Activated T-helper 2 cell treated with anti-CD3 and anti-CD28 coated beads, Interferon-gamma antibody, Interleukin-2, Interleukin-4, amounts not matched to agents 10 μg/mL and 5 μg/mL and 100 μg/mL, durations not matched to agents 14 hours and 24 hours and 36 hours (primary cell): ENCODE measurements at regions of chr3 and their contacts with region 1.

Region 1: GRCh38 chr3:45938864-45939263 is 4.4 kb upstream of the CXCR6 start:
- DNase-seq: peak; percentile 75
- H3K4me3 Mint-ChIP-seq: no peak overlapping the region
- H3K27ac Mint-ChIP-seq: no peak overlapping the region
- H3K4me1 Mint-ChIP-seq: peaks cover 44% of the 10 kb centered on the region
- H3K27me3 Mint-ChIP-seq: no peaks in the 10 kb centered on the region

Region 2: DNA sequence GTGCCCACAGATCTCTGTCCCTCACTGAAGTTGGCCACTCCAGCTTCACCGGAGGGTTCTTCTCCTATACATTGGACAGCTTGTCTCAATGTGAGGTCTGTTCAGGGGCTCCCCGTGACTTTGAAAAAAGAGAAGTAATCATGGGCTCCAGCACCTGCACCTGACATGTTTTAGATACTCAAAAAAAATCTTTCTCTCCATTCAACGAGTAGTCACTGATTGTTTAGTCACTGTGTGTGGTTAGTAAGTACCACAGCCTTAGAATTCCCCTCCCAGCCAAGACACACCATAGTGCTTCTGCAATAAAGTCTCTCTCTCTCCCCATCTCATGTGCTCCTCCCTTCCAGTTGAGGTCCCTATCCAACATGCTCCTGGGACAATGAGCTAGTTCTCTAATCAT is 33.9 kb before region 1 on chr3:
- intact Hi-C with region 1: no loop called
- DNase-seq: no peak
- H3K4me3 Mint-ChIP-seq: no peak overlapping the region
- H3K27ac Mint-ChIP-seq: no peak overlapping the region
- H3K4me1 Mint-ChIP-seq: peaks cover 22% of the 10 kb centered on the region
- H3K27me3 Mint-ChIP-seq: peaks cover 38% of the 10 kb centered on the region

Region 3: GRCh38 chr3:45915518-45916231 is 23.2 kb before region 1 on chr3:
- intact Hi-C with region 1: loop called (anchors 1 kb)
- DNase-seq: peak; percentile 68
- H3K4me3 Mint-ChIP-seq: peak overlapping the region; percentile 23
- H3K27ac Mint-ChIP-seq: peak overlapping the region; percentile 51
- H3K4me1 Mint-ChIP-seq: peaks cover 25% of the 10 kb centered on the region
- H3K27me3 Mint-ChIP-seq: peaks cover 38% of the 10 kb centered on the region

Region 4: DNA sequence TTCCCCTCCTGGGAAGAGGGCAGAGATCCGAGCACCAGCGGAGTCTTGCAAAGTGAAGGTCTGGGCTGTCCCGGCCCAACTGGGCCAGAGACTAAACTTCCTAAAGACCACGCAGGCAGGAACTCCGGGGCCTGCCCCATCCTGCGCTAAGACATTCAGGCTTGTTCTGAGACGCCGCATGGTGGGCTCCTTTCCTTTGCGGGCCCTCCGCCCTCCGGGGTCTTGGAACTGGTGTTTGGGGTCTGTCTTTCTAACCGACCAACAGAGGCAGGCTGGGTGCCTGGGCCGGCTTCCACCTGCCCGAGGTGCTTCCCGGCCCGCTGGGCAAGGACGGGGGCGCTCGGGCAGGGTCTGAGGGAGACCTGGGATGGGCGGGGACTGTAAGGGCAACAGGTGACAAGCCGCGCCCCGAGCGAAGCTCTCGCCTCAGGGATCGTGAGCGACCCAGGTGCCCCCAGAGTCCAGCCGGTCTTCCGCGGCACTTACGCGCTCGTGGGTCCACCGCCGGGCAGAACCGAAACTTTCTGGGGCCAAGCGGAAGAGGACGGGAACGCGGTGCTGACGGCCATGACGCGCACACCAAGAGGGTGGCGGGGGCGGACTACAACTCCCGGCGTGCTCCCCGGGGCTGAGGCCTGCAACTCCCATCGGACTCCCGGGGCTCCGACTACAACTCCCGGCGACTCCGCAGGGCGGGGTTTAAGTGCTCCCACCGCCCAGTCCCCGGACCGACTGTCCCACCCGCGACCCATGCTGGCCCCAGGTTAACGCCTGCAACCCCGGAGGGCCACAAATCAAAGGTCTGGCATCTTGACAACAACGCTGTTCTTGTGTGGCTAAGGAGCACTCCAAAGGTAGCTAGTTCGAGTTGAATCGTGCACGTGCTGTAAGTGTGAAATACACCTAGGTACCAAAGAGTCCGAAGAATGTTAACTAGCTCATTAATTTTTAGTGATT is 56.6 kb after region 1 on chr3 and contains the start of gene FYCO1:
- intact Hi-C with region 1: loop called (anchors 1 kb)
- DNase-seq: peak; percentile 80
- H3K4me3 Mint-ChIP-seq: peak within 1 kb of the TSS; percentile 85
- H3K27ac Mint-ChIP-seq: peak within 1 kb of the TSS; percentile 95
- H3K4me1 Mint-ChIP-seq: peaks cover 44% of the 10 kb centered on the region
- H3K27me3 Mint-ChIP-seq: peaks cover 13% of the 10 kb centered on the region
- total RNA-seq, gene FYCO1: 19.6 and 20.2 TPM in 2 replicates

Region 5: DNA sequence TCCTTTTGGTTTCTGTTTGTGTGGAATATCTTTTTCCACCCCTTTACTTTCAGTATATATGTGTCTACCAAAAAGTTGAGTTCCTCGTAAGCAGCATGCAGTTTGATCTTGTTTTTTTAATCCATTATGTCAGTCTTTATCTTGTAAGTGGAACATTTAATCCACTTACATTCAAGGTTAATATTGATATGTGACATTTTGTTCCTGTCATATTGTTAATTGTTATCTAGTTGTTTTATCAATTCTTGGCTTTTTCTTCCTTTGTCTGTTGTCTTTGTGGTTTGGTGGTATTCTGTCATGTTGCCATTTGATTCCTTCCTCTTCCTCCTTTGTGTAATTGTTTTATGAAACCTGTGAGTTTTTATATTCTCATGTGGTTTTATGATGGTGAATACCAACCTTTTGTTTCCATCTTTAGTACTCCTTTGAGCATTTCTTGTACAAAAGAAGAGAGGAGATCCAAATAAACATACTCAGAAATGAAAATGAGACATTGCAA is 131.8 kb after region 1 on chr3:
- intact Hi-C with region 1: loop called (anchors 1 kb)
- DNase-seq: no peak
- H3K4me3 Mint-ChIP-seq: peak overlapping the region; percentile 3
- H3K27ac Mint-ChIP-seq: peak overlapping the region; percentile 70
- H3K4me1 Mint-ChIP-seq: peaks cover 60% of the 10 kb centered on the region
- H3K27me3 Mint-ChIP-seq: peaks cover 26% of the 10 kb centered on the region

Region 6: GRCh38 chr3:46276502-46277099 is 337.7 kb after region 1 on chr3:
- intact Hi-C with region 1: loop called (anchors 10 kb)
- DNase-seq: peak; percentile 65
- H3K4me3 Mint-ChIP-seq: no peak overlapping the region
- H3K27ac Mint-ChIP-seq: no peak overlapping the region
- H3K4me1 Mint-ChIP-seq: peaks cover 38% of the 10 kb centered on the region
- H3K27me3 Mint-ChIP-seq: peaks cover 49% of the 10 kb centered on the region